ENCODE measurements at regions of chr7 and their contacts with region 1.

Region 1: GRCh38 chr7:150675714-150676113 is 9.8 kb upstream of the GIMAP2 start:
- DNase-seq: no peak
- H3K4me3 ChIP-seq: no peak overlapping the region
- H3K4me3 Mint-ChIP-seq: peak overlapping the region; percentile 39 to 89 (median 61)
- H3K27ac ChIP-seq: peak overlapping the region; percentile 18
- H3K27ac Mint-ChIP-seq: peak overlapping the region; percentile 26 to 92 (median 86)
- H3K4me1 ChIP-seq: peaks cover 75% of the 10 kb centered on the region
- H3K4me1 Mint-ChIP-seq: peaks cover 55 to 87% (median 70%) of the 10 kb centered on the region in 4 donors
- H3K27me3 ChIP-seq: no peaks in the 10 kb centered on the region
- H3K27me3 Mint-ChIP-seq: no peaks in the 10 kb centered on the region

Region 2: DNA sequence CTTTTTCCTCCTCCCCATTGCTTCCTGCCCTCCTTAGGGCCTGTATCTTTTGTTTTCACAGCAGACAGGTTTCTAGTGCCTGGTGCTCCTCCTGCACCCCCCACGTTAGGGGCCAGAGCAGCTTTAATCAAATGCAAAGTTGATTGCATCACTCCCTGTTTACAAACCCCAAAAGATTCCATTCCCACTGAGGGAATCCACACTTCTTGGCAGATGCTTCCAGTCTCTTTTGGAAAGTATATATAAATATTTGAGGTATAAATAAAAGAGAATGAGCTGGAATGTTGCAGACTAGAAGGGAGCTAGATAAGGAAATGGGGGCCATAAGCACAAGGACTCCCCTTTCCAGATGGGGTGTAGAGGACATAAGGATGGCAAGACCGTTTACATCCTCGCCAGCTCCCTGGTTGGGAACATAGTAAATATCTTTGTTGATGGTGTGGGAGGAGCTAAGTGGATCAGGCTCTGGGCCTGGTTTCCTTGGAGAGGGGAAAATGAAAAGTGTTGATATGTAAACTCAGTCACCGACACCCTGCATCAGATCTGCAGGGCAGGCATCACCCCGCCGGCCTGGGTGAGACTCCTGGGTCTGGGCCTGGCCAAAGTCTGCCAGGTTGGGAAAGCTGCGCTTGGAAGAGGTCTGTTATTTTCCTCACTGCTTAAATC is 340.5 kb before region 1 on chr7:
- CTCF ChIA-PET with region 1: no interaction called
- POLR2A ChIA-PET with region 1: no interaction called
- intact Hi-C with region 1: no loop called
- DNase-seq: no peak
- H3K4me3 ChIP-seq: no peak overlapping the region
- H3K4me3 Mint-ChIP-seq: no peak overlapping the region
- H3K27ac ChIP-seq: no peak overlapping the region
- H3K27ac Mint-ChIP-seq: peak overlapping the region in 1 of 7 donors; percentile 41
- H3K4me1 ChIP-seq: no peaks in the 10 kb centered on the region
- H3K4me1 Mint-ChIP-seq: peaks cover 0 to 6% (median 0%) of the 10 kb centered on the region in 4 donors
- H3K27me3 ChIP-seq: no peaks in the 10 kb centered on the region
- H3K27me3 Mint-ChIP-seq: peaks cover 1 to 2% of the 10 kb centered on the region in 2 donors

Region 3: DNA sequence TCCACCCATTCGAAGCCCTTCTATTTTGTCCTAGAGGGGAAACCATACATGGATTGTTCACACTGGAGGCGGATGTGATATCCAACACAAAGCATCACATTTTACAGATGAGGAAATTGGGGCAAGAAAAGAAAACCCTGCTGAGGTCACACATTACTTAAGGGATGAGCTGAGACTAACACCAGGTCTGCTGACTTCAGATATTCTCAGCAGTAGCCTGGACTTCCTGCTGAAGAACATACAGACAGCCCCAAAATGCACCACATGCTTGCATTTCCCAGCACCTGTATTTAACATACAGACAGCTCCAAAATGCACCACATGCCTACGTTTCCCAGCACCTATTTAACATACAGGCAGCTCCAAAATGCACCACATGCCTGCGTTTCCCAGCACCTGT is 72.7 kb after region 1 on chr7:
- CTCF ChIA-PET with region 1: no interaction called
- POLR2A ChIA-PET with region 1: interaction called, 149 read pairs
- intact Hi-C with region 1: no loop called
- DNase-seq: peak in 1 of 5 donors; percentile 44
- H3K4me3 ChIP-seq: peak overlapping the region; percentile 8 to 11
- H3K4me3 Mint-ChIP-seq: peak overlapping the region; percentile 26 to 95 (median 72)
- H3K27ac ChIP-seq: peak overlapping the region; percentile 37
- H3K27ac Mint-ChIP-seq: peak overlapping the region; percentile 83 to 95 (median 92)
- H3K4me1 ChIP-seq: peaks cover 96% of the 10 kb centered on the region
- H3K4me1 Mint-ChIP-seq: peaks cover 73 to 92% (median 83%) of the 10 kb centered on the region in 4 donors
- H3K27me3 ChIP-seq: no peaks in the 10 kb centered on the region
- H3K27me3 Mint-ChIP-seq: no peaks in the 10 kb centered on the region

Measured in CD4-positive, alpha-beta memory T cell (primary cell).